Sigmoid colon (tissue), 7 donors: ENCODE measurements at regions of chr10 and their contacts with region 1.

Region 1: GRCh38 chr10:7525314-7526016 is 114.6 kb upstream of the SFMBT2 start:
- DNase-seq: peak; percentile 80
- H3K4me3 ChIP-seq: no peak overlapping the region
- H3K27ac ChIP-seq: no peak overlapping the region
- H3K4me1 ChIP-seq: peaks cover 0 to 4% (median 0%) of the 10 kb centered on the region in 4 donors
- H3K27me3 ChIP-seq: peaks cover 0 to 8% (median 0%) of the 10 kb centered on the region in 3 donors
- CTCF ChIP-seq: peak; percentile 82 to 91 (median 86)
- EP300 ChIP-seq: no peak
- POLR2A ChIP-seq: no peak

Region 2: GRCh38 chr10:7378602-7379403 is 146.7 kb before region 1 on chr10:
- intact Hi-C with region 1: no loop called
- DNase-seq: peak; percentile 2
- H3K4me3 ChIP-seq: no peak overlapping the region
- H3K27ac ChIP-seq: no peak overlapping the region
- H3K4me1 ChIP-seq: no peaks in the 10 kb centered on the region
- H3K27me3 ChIP-seq: no peaks in the 10 kb centered on the region
- CTCF ChIP-seq: no peak
- EP300 ChIP-seq: no peak
- POLR2A ChIP-seq: no peak

Region 3: GRCh38 chr10:7687228-7687907 is 161.9 kb after region 1 on chr10:
- intact Hi-C with region 1: loop called (anchors 1 kb)
- DNase-seq: peak; percentile 93
- H3K4me3 ChIP-seq: no peak overlapping the region
- H3K27ac ChIP-seq: no peak overlapping the region
- H3K4me1 ChIP-seq: no peaks in the 10 kb centered on the region
- H3K27me3 ChIP-seq: no peaks in the 10 kb centered on the region
- CTCF ChIP-seq: peak; percentile 86 to 98 (median 96)
- EP300 ChIP-seq: no peak
- POLR2A ChIP-seq: no peak